ENCODE measurements at regions of chr6 and their contacts with region 1.

Region 1: DNA sequence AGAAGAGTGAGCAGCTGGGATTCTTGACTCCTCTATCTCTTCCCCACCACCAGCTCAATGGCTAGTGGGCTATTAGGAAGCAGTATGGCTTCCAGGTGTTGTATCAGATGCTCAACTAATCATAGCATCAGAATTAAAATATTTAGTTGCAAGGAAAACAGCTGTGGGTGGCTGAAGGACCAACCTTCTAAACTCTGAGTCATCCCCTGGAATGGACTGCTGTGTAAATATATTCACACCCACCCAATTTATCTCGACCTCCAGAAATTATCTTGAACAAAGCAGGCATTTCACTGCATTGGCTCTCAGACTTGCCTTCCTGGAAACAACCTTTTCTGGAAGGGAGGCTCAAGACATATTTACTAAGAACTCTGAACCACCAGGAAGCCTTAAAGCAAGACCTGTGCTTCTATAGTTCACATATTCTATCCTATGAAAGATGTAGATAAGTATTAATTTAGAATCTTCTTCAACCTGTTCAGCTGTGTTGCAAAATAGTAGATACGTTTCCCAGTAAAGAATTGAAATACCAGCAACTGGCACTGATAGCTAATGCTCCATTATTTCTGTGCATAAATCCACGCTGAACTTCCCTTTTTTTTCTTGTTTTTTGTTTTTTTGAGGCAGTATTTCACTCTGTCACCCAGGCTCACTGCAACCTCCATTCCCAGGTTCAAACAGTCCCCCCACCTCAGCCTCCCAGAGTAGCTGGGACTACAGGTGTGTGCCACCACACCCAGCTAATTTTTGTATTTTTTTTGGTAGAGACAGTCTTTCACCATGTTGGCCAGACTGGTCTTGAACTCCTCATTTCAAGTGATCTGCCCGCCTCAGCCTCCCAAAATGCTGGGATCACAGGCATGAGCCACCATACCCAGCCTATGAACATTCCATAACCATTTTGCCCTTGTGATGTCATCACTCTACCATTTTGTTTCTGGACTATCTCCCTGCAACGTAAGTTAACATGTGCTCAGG is 56.9 kb upstream of the CD2AP start:
- DNase-seq: peak in 1 of 2 experiments; percentile 56
- ATAC-seq: peak; percentile 34 to 74; a peak in 4 of 6 replicates
- H3K4me3 ChIP-seq: no peak overlapping the region
- H3K27ac ChIP-seq: peak overlapping the region; percentile 55 to 76; a peak in 5 of 6 replicates
- H3K4me1 ChIP-seq: peaks cover 22% of the 10 kb centered on the region
- CTCF ChIP-seq: no peak
- EP300 ChIP-seq: no peak
- POLR2A ChIP-seq: no peak
- RAD21 ChIP-seq: no peak

Region 2: GRCh38 chr6:47477497-47478232 is 57.0 kb after region 1 on chr6 and contains the start of gene CD2AP:
- CTCF ChIA-PET with region 1: interaction called, 4 read pairs
- POLR2A ChIA-PET with region 1: interaction called, 23 read pairs
- DNase-seq: peak; percentile 73 to 87
- ATAC-seq: peak; percentile 91 to 93
- H3K4me3 ChIP-seq: peak within 1 kb of the TSS; percentile 82
- H3K27ac ChIP-seq: peak within 1 kb of the TSS; percentile 96 to 100
- H3K4me1 ChIP-seq: peaks cover 32% of the 10 kb centered on the region
- CTCF ChIP-seq: no peak
- EP300 ChIP-seq: no peak
- POLR2A ChIP-seq: peak; percentile 48
- RAD21 ChIP-seq: no peak; a peak in 1 of 5 replicates
- polyA plus RNA-seq, gene CD2AP: 24.5 and 35.7 TPM in 2 replicates

Measured in A549 (cell line).